ENCODE measurements at regions of chr2 and their contacts with region 1.

Region 1: GRCh38 chr2:143223556-143223955 is 94.3 kb downstream of the ARHGAP15 start:
- DNase-seq: no peak

Region 2: DNA sequence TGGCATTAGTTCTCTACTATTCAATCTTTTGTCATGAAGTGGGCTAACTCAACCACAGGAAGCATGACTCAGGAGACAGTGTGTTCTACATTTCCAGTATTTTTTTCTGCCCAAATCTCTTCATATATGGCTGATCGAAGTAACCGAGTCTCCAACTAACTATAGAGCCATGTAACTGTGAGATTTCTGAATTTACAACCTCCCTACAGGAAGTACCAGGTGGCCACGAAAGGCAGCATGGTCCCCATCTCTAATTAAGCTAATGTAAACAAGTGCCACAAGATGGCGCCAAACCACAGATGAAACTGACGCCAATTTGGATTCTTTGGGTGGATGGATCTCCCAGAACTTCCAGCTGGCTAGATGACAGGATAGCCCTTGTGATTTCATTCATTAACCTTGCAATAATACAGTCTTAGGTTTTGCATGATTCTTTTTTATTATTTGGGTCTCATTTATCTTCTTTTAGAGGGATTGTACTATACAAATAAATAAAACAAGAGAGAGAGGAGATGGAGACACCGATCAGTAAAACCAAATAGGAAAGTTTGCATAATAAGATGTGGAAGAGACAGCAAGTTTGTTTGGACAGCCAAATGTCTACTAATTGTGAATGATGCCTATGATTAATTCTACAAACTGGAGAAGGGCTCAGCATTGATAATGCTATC is 112.7 kb before region 1 on chr2:
- intact Hi-C with region 1: loop called (anchors 2 kb)
- DNase-seq: peak in 6 of 10 donors; percentile 10 to 65 (median 45)

Region 3: GRCh38 chr2:143162123-143162837 is 61.3 kb before region 1 on chr2:
- intact Hi-C with region 1: no loop called
- DNase-seq: peak in 9 of 10 donors; percentile 13 to 92 (median 49)

Region 4: DNA sequence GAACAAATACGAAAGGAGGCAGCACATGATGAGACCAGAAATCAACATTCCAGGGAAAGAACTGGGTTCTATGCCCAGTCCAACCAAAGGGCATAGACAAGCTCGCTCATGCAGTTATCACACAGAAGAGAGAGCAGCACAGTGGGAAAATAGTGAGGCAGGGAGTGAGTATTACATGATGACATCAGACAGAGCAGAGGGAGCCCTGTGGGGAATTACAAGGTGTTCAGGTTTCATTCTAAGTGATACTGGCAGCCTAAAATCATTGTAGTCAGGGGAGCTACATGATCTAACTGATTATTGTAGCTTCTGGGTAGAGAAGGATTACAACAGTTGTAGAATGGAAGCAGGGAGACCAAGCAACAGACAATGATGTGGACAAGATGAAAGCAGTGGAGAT is 564.1 kb after region 1 on chr2:
- intact Hi-C with region 1: no loop called
- DNase-seq: no peak